GM10248 (cell line): ENCODE measurements at regions of chr12 and their contacts with region 1.

Region 1: DNA sequence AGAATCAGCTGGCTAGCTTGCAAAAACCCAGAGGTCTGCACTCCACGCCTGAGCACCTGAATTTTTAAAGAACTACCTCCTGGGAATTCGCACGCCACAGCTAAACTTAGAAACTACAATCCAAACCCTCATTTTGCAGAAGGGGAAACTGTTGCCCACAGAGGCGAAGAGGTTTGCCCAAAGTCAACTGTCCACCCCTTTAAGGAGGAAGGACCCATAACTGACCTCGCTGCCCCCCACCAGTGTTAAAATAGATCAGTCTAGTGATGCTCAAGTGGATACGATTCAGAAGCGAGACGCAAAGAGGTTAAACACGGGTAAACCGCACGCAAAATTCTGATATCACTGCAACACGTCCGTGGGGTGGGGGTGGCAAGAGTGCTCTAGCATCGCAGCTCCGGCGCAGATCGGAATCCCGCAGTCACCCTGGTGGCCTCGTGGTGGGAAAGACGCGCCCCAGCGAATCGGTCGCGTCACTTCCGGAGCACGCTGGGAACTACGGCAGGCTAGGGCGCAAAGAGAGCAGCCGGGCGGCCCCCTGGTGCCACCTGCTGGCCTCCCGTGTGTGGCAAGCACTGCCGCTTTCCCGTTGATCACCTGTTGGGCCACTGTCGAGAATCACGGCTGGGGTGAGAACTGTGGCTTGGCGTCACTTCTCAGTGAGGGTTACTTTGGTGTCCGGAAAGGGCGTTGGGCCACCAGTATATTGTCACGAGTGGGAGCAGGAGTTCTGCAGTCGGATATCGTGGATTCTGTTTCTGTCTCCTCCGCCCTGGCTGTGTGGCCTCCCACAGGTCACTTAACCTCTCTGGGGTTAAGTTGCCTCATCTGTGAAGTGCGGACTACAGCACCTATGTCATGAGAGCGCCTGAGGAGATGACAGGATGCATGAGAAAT is at the start of gene ALKBH2:
- DNase-seq: peak; percentile 92
- CTCF ChIP-seq: peak; percentile 99

Region 2: DNA sequence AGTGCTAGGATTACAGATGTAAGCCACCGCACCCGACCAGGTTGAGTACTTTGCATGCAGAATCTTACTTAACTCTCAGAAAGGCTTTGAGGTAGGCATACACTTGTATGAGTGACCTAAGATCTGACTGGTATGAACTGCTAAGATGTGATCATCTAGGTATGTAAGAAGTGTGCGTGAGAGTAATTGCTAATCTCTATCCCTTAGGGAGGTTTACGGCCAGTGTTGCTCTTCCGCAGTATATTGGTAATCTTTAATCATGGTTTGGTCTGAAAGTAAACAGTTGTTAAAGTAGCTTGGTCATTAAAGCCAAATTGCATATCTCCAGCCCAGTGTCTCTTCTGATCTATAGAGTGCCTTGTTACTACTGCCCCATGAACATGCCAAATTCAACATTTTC is 11.9 kb after region 1 on chr12:
- CTCF ChIA-PET with region 1: interaction called, 10 read pairs
- POLR2A ChIA-PET with region 1: interaction called, 3 read pairs
- DNase-seq: no peak
- CTCF ChIP-seq: no peak